ENCODE measurements at regions of chr5 and their contacts with region 1.

Region 1: GRCh38 chr5:160439205-160439600 is 17.5 kb downstream of the PTTG1 start:
- DNase-seq: peak; percentile 84
- H3K4me3 Mint-ChIP-seq: peak overlapping the region; percentile 69
- H3K27ac Mint-ChIP-seq: no peak overlapping the region
- H3K4me1 Mint-ChIP-seq: peaks cover 10% of the 10 kb centered on the region
- H3K27me3 Mint-ChIP-seq: peaks cover 13% of the 10 kb centered on the region
- CTCF ChIP-seq: peak; percentile 91

Region 2: DNA sequence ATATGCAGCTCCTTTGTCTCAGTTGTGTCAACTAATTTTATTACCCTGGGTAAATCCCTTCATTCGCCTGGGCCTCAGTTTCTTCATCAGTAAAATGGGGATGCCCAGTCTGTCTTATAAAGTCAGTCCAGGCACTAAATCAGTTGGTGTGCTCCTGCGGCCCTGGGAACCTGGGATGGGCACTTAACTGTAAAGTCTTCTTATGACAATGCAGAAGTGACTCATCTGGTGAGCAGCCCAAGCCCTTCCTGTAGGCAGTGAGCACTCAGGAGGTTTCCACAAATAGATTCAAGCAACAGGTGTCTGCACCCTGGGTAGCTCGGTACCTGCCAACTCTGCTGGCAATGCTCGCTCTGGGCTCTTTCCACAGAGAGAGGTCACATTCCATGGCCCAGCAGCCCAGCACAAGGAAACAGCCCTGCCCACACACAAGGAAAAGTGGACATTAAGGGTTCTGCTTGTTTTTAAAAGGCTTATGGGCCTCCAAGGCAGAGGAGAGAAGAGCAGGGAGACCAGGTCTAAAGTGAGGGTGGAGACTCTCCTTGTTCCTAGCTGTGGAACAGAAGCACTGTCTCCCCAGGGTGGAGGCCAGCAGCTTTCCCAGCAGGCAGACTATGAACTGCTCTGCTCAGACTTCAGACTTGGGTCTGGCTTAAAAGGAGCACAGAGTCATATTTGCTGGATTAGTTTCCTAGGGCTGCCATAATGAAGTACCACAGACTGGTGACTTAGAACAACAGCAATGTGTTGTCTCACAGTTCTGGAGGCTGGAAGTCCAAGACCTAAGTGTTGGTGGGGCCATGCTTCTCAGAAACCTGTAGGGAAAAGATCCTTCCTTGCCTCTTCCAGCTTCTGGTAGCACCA is 612.6 kb before region 1 on chr5:
- CTCF ChIA-PET with region 1: no interaction called
- POLR2A ChIA-PET with region 1: no interaction called
- intact Hi-C with region 1: no loop called
- DNase-seq: peak; percentile 98
- H3K4me3 Mint-ChIP-seq: peak overlapping the region; percentile 5
- H3K27ac Mint-ChIP-seq: peak overlapping the region; percentile 70
- H3K4me1 Mint-ChIP-seq: peaks cover 35% of the 10 kb centered on the region
- H3K27me3 Mint-ChIP-seq: no peaks in the 10 kb centered on the region
- CTCF ChIP-seq: no peak

Region 3: GRCh38 chr5:160452795-160453194 is 13.6 kb after region 1 on chr5:
- CTCF ChIA-PET with region 1: interaction called, 49 read pairs
- POLR2A ChIA-PET with region 1: no interaction called
- intact Hi-C with region 1: no loop called
- DNase-seq: no peak
- H3K4me3 Mint-ChIP-seq: no peak overlapping the region
- H3K27ac Mint-ChIP-seq: no peak overlapping the region
- H3K4me1 Mint-ChIP-seq: no peaks in the 10 kb centered on the region
- H3K27me3 Mint-ChIP-seq: no peaks in the 10 kb centered on the region
- CTCF ChIP-seq: no peak

Region 4: DNA sequence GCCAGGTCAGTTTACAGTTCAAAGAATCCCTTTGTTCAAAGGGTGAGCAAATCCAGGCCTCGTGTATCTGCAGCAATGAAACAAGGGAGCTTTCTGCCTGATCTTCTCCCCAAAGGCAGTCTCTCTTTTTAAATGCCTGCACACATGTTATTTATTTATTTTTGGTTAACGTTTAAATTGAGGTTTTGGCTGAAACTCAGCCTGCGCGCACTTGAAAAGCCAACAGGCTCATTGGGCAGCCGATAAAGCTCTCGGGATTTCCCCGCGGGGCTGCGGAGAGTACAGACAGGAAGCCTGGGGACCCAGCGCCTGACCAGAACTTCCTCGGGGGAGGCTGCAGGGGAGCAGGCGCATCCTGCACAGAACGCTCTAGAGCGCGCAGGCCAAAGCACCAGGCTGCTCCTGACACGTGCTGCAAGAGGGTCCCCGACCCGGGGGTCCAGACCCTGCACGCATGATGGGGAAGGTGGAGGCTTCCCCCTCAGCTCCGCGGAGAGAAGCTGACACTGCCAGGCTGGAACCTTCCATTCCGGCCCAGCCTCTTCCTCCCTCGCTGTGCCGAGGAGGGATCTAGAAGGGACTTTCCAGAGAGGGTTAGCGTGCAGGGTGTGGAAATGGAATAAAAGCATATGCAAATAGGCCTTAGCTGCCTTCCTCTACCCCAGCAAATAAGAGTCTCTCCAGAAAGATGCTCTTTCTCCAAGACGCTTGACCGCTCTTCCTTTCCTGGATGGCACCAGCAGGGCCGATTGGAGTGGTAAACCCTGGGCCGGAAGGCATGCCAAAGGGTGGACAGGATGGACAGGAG is 28.6 kb after region 1 on chr5:
- CTCF ChIA-PET with region 1: interaction called, 52 read pairs
- POLR2A ChIA-PET with region 1: interaction called, 3 read pairs
- intact Hi-C with region 1: no loop called
- DNase-seq: no peak
- H3K4me3 Mint-ChIP-seq: peak overlapping the region; percentile 18
- H3K27ac Mint-ChIP-seq: no peak overlapping the region
- H3K4me1 Mint-ChIP-seq: peaks cover 12% of the 10 kb centered on the region
- H3K27me3 Mint-ChIP-seq: no peaks in the 10 kb centered on the region
- CTCF ChIP-seq: no peak

Region 5: GRCh38 chr5:160508780-160509361 is 69.7 kb after region 1 on chr5:
- CTCF ChIA-PET with region 1: interaction called, 47 read pairs
- POLR2A ChIA-PET with region 1: interaction called, 3 read pairs
- intact Hi-C with region 1: loop called (anchors 1 kb)
- DNase-seq: peak; percentile 86
- H3K4me3 Mint-ChIP-seq: no peak overlapping the region
- H3K27ac Mint-ChIP-seq: no peak overlapping the region
- H3K4me1 Mint-ChIP-seq: peaks cover 5% of the 10 kb centered on the region
- H3K27me3 Mint-ChIP-seq: peaks cover 21% of the 10 kb centered on the region
- CTCF ChIP-seq: peak; percentile 96

Region 6: GRCh38 chr5:160787240-160787639 is 348.0 kb after region 1 on chr5:
- CTCF ChIA-PET with region 1: interaction called, 6 read pairs
- POLR2A ChIA-PET with region 1: no interaction called
- intact Hi-C with region 1: loop called (anchors 5 kb)
- DNase-seq: peak; percentile 57
- H3K4me3 Mint-ChIP-seq: no peak overlapping the region
- H3K27ac Mint-ChIP-seq: no peak overlapping the region
- H3K4me1 Mint-ChIP-seq: peaks cover 6% of the 10 kb centered on the region
- H3K27me3 Mint-ChIP-seq: no peaks in the 10 kb centered on the region
- CTCF ChIP-seq: peak; percentile 38

Region 7: DNA sequence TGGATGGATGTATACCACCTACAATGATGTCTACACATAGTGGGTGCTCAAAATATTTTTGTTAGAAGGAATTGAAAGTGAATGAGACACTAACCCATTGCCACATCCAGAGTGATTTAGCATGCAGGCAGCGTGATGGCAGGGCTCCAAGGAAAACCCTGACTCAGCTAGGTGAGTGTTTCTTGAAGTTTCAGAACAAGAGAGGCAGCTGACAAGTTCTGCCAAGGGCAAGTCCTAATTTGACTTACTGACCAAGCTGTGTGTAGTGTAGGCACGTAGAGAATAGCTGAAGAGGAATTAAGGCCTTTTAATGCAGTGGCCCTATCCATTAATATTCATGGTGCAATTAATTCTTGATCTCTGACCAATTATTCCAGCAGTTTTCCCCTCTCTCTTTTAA is 520.6 kb after region 1 on chr5:
- CTCF ChIA-PET with region 1: interaction called, 3 read pairs
- POLR2A ChIA-PET with region 1: no interaction called
- intact Hi-C with region 1: loop called (anchors 10 kb)
- DNase-seq: peak; percentile 99
- H3K4me3 Mint-ChIP-seq: no peak overlapping the region
- H3K27ac Mint-ChIP-seq: peak overlapping the region; percentile 69
- H3K4me1 Mint-ChIP-seq: peaks cover 37% of the 10 kb centered on the region
- H3K27me3 Mint-ChIP-seq: no peaks in the 10 kb centered on the region
- CTCF ChIP-seq: no peak

Region 8: GRCh38 chr5:161676103-161676502 is 1236.9 kb after region 1 on chr5:
- CTCF ChIA-PET with region 1: no interaction called
- POLR2A ChIA-PET with region 1: no interaction called
- intact Hi-C with region 1: loop called (anchors 5 kb)
- DNase-seq: peak; percentile 54
- H3K4me3 Mint-ChIP-seq: no peak overlapping the region
- H3K27ac Mint-ChIP-seq: no peak overlapping the region
- H3K4me1 Mint-ChIP-seq: no peaks in the 10 kb centered on the region
- H3K27me3 Mint-ChIP-seq: peaks cover 29% of the 10 kb centered on the region
- CTCF ChIP-seq: peak; percentile 73